Caco-2 (cell line): ENCODE measurements at regions of chr2 and their contacts with region 1.

Region 1: GRCh38 chr2:234494361-234495250 is 2.3 kb downstream of the ARL4C start:
- DNase-seq: no peak
- H3K4me3 ChIP-seq: peak overlapping the region; percentile 96
- H3K4me3 Mint-ChIP-seq: peak overlapping the region; percentile 95
- H3K27ac Mint-ChIP-seq: peak overlapping the region; percentile 91
- H3K4me1 ChIP-seq: peaks cover 6% of the 10 kb centered on the region
- H3K4me1 Mint-ChIP-seq: no peaks in the 10 kb centered on the region
- H3K27me3 ChIP-seq: no peaks in the 10 kb centered on the region
- H3K27me3 Mint-ChIP-seq: no peaks in the 10 kb centered on the region
- CTCF ChIP-seq: no peak

Region 2: GRCh38 chr2:233966388-233966787 is 528.2 kb before region 1 on chr2:
- CTCF ChIA-PET with region 1: no interaction called
- POLR2A ChIA-PET with region 1: no interaction called
- intact Hi-C with region 1: no loop called
- DNase-seq: no peak
- H3K4me3 ChIP-seq: no peak overlapping the region
- H3K4me3 Mint-ChIP-seq: no peak overlapping the region
- H3K27ac Mint-ChIP-seq: no peak overlapping the region
- H3K4me1 ChIP-seq: no peaks in the 10 kb centered on the region
- H3K4me1 Mint-ChIP-seq: no peaks in the 10 kb centered on the region
- H3K27me3 ChIP-seq: no peaks in the 10 kb centered on the region
- H3K27me3 Mint-ChIP-seq: peaks cover 3% of the 10 kb centered on the region
- CTCF ChIP-seq: no peak

Region 3: DNA sequence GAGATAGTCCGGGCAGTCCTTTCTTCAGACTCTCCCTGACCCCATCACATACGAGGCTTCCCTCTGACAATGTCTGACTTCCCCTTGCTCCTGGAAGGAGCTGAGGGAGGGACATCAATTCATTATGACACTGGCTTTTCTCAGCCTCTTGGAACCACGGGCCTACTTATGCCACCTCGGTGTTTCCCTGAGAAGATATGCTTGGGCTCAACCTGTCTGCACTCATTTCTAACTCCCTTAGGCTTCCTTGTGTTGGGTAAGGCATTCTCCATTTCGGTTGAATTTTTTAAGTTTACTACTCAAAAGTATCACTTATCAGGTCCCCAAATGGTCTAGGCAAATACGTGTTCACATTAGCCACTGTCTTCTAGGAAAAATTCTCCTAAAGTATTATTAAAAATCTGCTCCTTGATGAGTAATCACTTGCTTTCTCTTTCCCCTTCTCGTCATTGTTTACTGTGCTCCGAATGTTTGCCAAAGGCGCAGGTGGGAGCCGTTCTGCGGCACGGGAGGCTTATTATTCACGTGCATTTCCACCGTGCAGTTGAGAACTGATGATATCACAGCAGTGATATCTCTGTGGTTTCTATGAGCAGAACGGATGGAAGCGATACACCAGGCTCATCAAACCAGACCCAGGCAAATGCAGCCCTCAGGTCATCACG is 30.8 kb before region 1 on chr2:
- CTCF ChIA-PET with region 1: no interaction called
- POLR2A ChIA-PET with region 1: interaction called, 3 read pairs
- intact Hi-C with region 1: loop called (anchors 2 kb)
- DNase-seq: peak; percentile 51 to 67
- H3K4me3 ChIP-seq: no peak overlapping the region
- H3K4me3 Mint-ChIP-seq: peak overlapping the region; percentile 47
- H3K27ac Mint-ChIP-seq: peak overlapping the region; percentile 95
- H3K4me1 ChIP-seq: peaks cover 70% of the 10 kb centered on the region
- H3K4me1 Mint-ChIP-seq: peaks cover 33% of the 10 kb centered on the region
- H3K27me3 ChIP-seq: no peaks in the 10 kb centered on the region
- H3K27me3 Mint-ChIP-seq: no peaks in the 10 kb centered on the region
- CTCF ChIP-seq: no peak

Region 4: DNA sequence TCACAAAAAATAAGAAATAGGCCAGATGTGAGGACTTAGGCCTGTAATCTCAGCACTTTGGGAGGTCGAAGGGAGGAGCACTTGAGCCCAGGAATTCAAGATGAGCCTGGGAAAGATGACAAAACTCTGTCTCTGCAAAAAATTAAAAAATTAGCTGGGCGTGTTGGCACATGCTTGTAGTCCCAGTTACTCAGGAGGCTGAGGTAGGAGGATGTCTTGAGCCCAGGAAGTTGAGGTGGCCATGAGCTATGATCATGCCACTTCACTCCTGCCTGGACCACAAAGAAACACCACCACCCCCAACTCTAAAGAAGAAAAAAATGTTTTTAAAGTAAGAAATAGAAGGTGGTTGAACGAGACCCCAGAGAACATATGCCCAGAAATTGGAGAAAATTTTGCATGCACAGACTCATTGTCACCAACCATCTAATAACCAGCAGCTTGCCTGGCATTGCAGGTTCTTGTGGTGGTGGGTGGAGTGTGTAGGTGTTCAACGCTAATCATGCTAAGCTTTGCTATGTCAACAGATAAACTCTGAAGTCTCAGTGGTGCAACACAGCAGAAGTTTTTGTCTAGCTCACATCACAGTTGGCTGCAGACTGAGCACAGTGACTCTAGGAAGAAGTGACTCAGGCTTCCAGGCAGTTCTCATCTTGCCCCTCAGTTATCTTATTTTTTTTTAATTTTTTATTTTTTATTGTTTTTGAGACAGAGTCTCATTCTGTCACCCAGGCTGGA is 16.3 kb before region 1 on chr2:
- CTCF ChIA-PET with region 1: no interaction called
- POLR2A ChIA-PET with region 1: no interaction called
- intact Hi-C with region 1: no loop called
- DNase-seq: no peak
- H3K4me3 ChIP-seq: no peak overlapping the region
- H3K4me3 Mint-ChIP-seq: no peak overlapping the region
- H3K27ac Mint-ChIP-seq: no peak overlapping the region
- H3K4me1 ChIP-seq: no peaks in the 10 kb centered on the region
- H3K4me1 Mint-ChIP-seq: no peaks in the 10 kb centered on the region
- H3K27me3 ChIP-seq: no peaks in the 10 kb centered on the region
- H3K27me3 Mint-ChIP-seq: no peaks in the 10 kb centered on the region
- CTCF ChIP-seq: no peak